ENCODE measurements at regions of chr6 and their contacts with region 1.

Region 1: GRCh38 chr6:144696610-144697368 is 411.7 kb downstream of the UTRN start:
- DNase-seq: no peak
- ATAC-seq: no peak
- H3K4me3 ChIP-seq: no peak overlapping the region
- H3K27ac ChIP-seq: no peak overlapping the region
- H3K4me1 ChIP-seq: no peaks in the 10 kb centered on the region
- H3K27me3 ChIP-seq: no peaks in the 10 kb centered on the region
- CTCF ChIP-seq: no peak

Region 2: DNA sequence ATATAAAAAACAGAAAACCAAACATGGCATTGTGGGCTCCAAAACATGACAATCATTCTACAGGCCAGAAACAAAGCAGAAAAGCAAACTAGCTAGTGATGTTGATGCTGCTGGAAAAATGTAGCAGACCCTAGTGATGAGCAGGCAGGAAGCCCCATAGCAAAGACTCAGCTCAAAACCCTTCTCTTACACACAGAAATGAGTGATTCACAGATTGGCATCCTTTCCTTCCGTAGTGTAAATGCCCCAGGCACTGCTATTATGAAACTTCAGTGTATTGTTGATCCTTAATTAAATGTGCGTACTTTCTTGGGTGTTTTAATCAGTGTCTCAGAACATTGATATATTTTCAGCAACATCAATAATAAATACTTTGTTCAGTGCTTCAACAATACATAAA is 13.4 kb after region 1 on chr6:
- CTCF ChIA-PET with region 1: interaction called, 4 read pairs
- POLR2A ChIA-PET with region 1: interaction called, 10 read pairs
- in situ Hi-C with region 1: no loop called
- intact Hi-C with region 1: no loop called
- DNase-seq: peak; percentile 25
- ATAC-seq: peak; percentile 83; the same call in 1 of the 2 replicates
- H3K4me3 ChIP-seq: no peak overlapping the region
- H3K27ac ChIP-seq: no peak overlapping the region
- H3K4me1 ChIP-seq: no peaks in the 10 kb centered on the region; the same call in 1 of the 2 replicates
- H3K27me3 ChIP-seq: no peaks in the 10 kb centered on the region
- CTCF ChIP-seq: no peak

Region 3: DNA sequence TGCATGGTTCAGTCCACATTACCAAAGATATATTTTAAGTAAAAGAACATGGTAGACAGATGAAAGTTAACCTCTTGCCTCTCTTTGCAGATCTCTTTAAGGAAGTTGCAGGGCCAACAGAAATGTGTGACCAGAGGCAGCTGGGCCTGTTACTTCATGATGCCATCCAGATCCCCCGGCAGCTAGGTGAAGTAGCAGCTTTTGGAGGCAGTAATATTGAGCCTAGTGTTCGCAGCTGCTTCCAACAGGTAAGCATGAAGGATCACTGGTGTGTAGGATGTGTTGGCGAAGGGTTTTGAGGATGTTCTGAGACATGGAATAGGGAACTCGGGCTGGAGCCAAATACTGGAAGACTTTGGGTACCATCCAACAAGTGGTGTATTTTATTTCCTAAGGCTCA is 97.0 kb after region 1 on chr6:
- CTCF ChIA-PET with region 1: no interaction called
- POLR2A ChIA-PET with region 1: no interaction called
- in situ Hi-C with region 1: no loop called
- intact Hi-C with region 1: no loop called
- DNase-seq: no peak
- ATAC-seq: no peak
- H3K4me3 ChIP-seq: no peak overlapping the region
- H3K27ac ChIP-seq: no peak overlapping the region
- H3K4me1 ChIP-seq: 0 out of 2 replicates have a peak, but pooled peaks cover 4% of the 10 kb centered on the region
- H3K27me3 ChIP-seq: no peaks in the 10 kb centered on the region
- CTCF ChIP-seq: no peak